HAP-1 (cell line): ENCODE measurements at regions of chr16 and their contacts with region 1.

Region 1: GRCh38 chr16:2595393-2596205 is 57.8 kb downstream of the PDPK1 start:
- DNase-seq: no peak
- H3K4me3 ChIP-seq: no peak overlapping the region
- H3K4me1 ChIP-seq: no peaks in the 10 kb centered on the region
- H3K27me3 ChIP-seq: no peaks in the 10 kb centered on the region

Region 2: GRCh38 chr16:2447920-2448583 is 147.5 kb before region 1 on chr16:
- in situ Hi-C with region 1: no loop called
- DNase-seq: no peak
- H3K4me3 ChIP-seq: no peak overlapping the region
- H3K4me1 ChIP-seq: no peaks in the 10 kb centered on the region
- H3K27me3 ChIP-seq: no peaks in the 10 kb centered on the region

Region 3: GRCh38 chr16:2537453-2538379 is 57.9 kb before region 1 on chr16 and contains the start of gene PDPK1:
- in situ Hi-C with region 1: loop called (anchors 5 kb)
- DNase-seq: peak; percentile 88 to 94
- H3K4me3 ChIP-seq: peak within 1 kb of the TSS; percentile 53
- H3K4me1 ChIP-seq: peaks cover 6% of the 10 kb centered on the region
- H3K27me3 ChIP-seq: no peaks in the 10 kb centered on the region